A549 (cell line): ENCODE measurements at regions of chr3 and their contacts with region 1.

Region 1: DNA sequence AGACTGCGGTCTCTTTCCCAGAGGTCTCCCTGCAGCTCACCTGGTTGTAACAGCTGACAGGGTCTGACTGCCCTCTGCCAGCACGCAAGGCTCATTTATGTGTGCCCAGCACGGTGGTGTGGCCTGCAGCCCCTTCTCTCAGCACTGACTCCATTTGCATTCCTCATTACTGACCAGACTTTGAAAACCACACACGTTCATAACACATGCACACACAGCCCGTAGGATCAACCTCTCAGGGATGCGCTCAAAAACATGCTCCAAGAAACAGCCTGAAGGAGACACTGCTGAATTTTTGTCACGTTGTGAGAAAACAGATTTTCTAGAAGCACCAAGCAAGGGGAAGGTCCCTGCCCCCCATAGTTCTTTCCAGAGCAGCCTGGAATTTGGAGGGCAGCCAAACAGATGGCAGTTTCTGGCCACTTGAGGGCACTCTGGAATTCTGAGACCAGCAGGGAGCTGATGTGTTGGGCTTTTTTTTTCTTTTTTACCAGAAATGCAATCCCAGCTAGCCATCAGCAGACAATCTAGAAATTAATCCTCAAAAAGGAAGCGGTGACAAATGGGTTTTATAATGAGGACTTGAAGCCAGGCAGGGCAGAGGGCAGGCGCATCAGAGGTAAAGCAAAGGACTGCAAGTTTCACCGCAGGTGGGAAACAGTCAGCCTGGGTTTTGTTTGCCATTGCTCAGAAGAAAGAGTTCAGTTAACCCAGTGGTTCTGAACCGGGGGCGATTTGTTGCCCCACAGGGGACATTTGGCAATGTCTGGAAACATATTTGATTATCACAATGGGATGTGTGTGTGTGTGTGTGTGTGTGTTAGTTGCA is 170.5 kb upstream of the PROK2 start:
- DNase-seq: peak; percentile 36 to 48
- ATAC-seq: peak; percentile 77 to 85; a peak in 5 of 6 replicates
- H3K4me3 ChIP-seq: no peak overlapping the region
- H3K27ac ChIP-seq: no peak overlapping the region
- H3K4me1 ChIP-seq: no peaks in the 10 kb centered on the region
- CTCF ChIP-seq: peak; percentile 80
- EP300 ChIP-seq: no peak
- POLR2A ChIP-seq: no peak
- RAD21 ChIP-seq: peak; percentile 80 to 88

Region 2: DNA sequence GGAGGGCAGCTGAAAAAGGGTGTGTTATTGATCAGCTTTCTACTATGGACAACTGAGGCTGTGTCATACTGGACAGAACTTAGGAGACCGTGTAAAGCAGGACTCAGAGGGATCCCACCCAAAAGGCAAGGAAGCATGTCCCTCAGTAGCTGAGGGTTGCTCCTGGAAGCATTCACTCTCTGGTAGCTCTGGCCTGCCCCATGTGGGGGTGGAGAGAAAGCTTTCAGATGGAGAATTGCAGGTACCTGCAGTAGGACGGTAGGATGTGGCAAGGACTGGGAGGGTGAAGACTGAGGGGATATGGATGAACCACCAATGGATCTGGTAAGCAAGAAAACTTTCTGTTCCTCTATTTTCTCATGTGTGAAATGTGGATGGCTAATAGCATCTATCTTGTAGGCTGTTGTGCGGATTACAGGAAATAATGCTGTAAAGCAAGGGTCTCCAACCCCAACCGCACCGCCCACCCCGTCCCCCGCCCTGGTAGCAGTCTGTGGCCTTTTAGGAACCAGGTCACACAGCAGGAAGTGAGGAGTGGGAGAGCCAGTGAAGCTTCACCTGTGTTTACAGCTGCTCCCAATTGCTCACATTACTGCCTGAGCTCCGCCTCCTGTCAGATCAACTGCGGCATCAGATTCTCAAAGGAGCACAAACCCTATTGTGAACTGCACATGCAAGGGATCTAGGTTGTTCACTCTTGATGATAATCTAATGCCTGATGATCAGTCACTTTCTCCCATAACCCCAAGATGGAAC is 12.8 kb before region 1 on chr3:
- CTCF ChIA-PET with region 1: interaction called, 19 read pairs
- POLR2A ChIA-PET with region 1: no interaction called
- DNase-seq: no peak
- ATAC-seq: no peak
- H3K4me3 ChIP-seq: no peak overlapping the region
- H3K27ac ChIP-seq: no peak overlapping the region
- H3K4me1 ChIP-seq: no peaks in the 10 kb centered on the region
- CTCF ChIP-seq: no peak
- EP300 ChIP-seq: no peak
- POLR2A ChIP-seq: no peak
- RAD21 ChIP-seq: no peak